Heart right ventricle (tissue), 16 donors: ENCODE measurements at regions of chr12 and their contacts with region 1.

Region 1: DNA sequence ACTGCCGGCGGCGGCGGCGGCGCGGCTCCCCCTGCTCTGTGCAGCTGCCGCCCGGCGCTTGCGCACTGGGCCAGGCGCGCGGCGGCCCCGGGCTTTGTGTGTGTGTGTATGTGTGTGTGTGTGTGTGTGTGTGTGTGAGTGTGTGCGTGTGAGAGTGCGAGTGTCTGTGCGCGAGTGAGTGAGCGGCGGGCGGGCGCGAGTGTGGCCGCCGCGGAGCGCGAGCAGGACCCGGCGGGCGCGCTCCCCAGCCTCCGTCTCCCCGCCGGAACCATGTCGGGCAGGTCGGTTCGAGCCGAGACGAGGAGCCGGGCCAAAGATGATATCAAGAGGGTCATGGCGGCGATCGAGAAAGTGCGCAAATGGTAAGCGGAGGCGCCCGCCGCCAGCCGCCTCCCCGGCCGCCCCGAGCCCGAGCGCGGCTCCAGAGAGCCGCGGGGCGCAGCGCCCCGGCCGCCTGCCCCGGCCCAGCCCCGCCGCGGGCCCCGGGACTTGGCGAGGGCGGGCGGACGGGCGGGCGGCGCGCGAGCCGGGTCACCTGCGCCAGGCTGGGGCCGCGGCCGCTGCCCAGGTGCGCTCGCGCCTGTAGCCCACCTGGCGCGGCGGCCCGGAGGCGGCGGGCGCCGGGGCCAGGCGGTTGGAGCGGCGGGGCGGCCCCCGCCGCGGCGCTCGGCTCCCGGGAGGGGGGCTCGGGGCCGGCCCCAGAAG is at the start of gene BCL7A:
- DNase-seq: peak; percentile 64 to 69
- ATAC-seq: peak; percentile 59 to 81 (median 72)
- H3K4me3 ChIP-seq: peak within 1 kb of the TSS; percentile 67 to 84 (median 70)
- H3K27ac ChIP-seq: peak within 1 kb of the TSS; percentile 75 to 92 (median 84)
- H3K4me1 ChIP-seq: peaks cover 7 to 35% (median 25%) of the 10 kb centered on the region in 9 donors
- H3K27me3 ChIP-seq: peaks cover 0 to 31% (median 0%) of the 10 kb centered on the region in 7 donors
- CTCF ChIP-seq: no peak
- total RNA-seq, gene BCL7A: 13.2 to 25.7 (median 16.2) TPM

Region 2: GRCh38 chr12:121917979-121918678 is 103.8 kb before region 1 on chr12 and contains the start of gene CFAP251:
- intact Hi-C with region 1: loop called in 4 of 10 experiments (anchors 5 to 10 kb)
- DNase-seq: peak; percentile 90 to 96
- ATAC-seq: peak; percentile 90 to 98 (median 96)
- H3K4me3 ChIP-seq: peak within 1 kb of the TSS in 9 of 10 donors; percentile 35 to 58 (median 52)
- H3K27ac ChIP-seq: peak within 1 kb of the TSS in 7 of 10 donors; percentile 21 to 71 (median 44)
- H3K4me1 ChIP-seq: peaks cover 0 to 17% (median 5%) of the 10 kb centered on the region in 9 donors
- H3K27me3 ChIP-seq: no peaks in the 10 kb centered on the region
- CTCF ChIP-seq: peak; percentile 21 to 88 (median 67)
- total RNA-seq, gene CFAP251: 0.52 to 4.6 (median 1.9) TPM

Region 3: DNA sequence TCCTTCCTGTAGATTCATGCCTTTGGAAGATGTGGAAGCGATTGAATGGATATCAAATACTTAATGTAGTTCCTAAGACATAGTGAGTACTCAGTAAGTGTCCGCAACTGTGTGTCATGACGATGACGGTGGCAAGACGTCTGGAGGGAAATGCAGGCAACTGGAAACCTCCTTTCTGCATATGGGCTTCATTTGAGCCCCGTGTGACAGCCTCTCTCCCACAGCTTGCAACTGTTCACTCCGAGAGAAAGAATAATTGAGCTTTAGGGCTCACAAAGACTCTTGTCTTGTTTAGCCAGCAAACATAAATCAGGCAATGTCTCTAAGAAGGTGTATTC is 96.6 kb before region 1 on chr12:
- intact Hi-C with region 1: loop called in 1 of 10 experiments (anchors 10 kb)
- DNase-seq: no peak
- ATAC-seq: peak in 4 of 8 donors; percentile 16 to 49 (median 26)
- H3K4me3 ChIP-seq: peak overlapping the region in 5 of 10 donors; percentile 24 to 32 (median 28)
- H3K27ac ChIP-seq: peak overlapping the region in 8 of 10 donors; percentile 69 to 88 (median 76)
- H3K4me1 ChIP-seq: peaks cover 0 to 34% (median 20%) of the 10 kb centered on the region in 9 donors
- H3K27me3 ChIP-seq: no peaks in the 10 kb centered on the region
- CTCF ChIP-seq: no peak

Region 4: GRCh38 chr12:121955258-121956235 is 66.4 kb before region 1 on chr12:
- intact Hi-C with region 1: loop called in 2 of 10 experiments (anchors 2 to 10 kb)
- DNase-seq: no peak
- ATAC-seq: peak in 2 of 8 donors; percentile 22 to 42
- H3K4me3 ChIP-seq: no peak overlapping the region
- H3K27ac ChIP-seq: no peak overlapping the region
- H3K4me1 ChIP-seq: no peaks in the 10 kb centered on the region
- H3K27me3 ChIP-seq: no peaks in the 10 kb centered on the region
- CTCF ChIP-seq: peak in 8 of 9 donors; percentile 15 to 61 (median 56)

Region 5: GRCh38 chr12:121964813-121965643 is 56.9 kb before region 1 on chr12:
- intact Hi-C with region 1: loop called in 2 of 10 experiments (anchors 5 to 10 kb)
- DNase-seq: no peak
- ATAC-seq: peak in 3 of 8 donors; percentile 6 to 50 (median 17)
- H3K4me3 ChIP-seq: no peak overlapping the region
- H3K27ac ChIP-seq: no peak overlapping the region
- H3K4me1 ChIP-seq: peaks cover 0 to 14% (median 4%) of the 10 kb centered on the region in 9 donors
- H3K27me3 ChIP-seq: no peaks in the 10 kb centered on the region
- CTCF ChIP-seq: no peak